Breast epithelium (tissue), 4 donors: ENCODE measurements at regions of chr12 and their contacts with region 1.

Region 1: GRCh38 chr12:30006021-30006420 is 222.3 kb upstream of the TMTC1 start:
- DNase-seq: no peak
- H3K4me3 ChIP-seq: no peak overlapping the region
- H3K27ac ChIP-seq: no peak overlapping the region
- H3K4me1 ChIP-seq: no peaks in the 10 kb centered on the region
- H3K27me3 ChIP-seq: no peaks in the 10 kb centered on the region
- CTCF ChIP-seq: no peak
- POLR2A ChIP-seq: no peak

Region 2: DNA sequence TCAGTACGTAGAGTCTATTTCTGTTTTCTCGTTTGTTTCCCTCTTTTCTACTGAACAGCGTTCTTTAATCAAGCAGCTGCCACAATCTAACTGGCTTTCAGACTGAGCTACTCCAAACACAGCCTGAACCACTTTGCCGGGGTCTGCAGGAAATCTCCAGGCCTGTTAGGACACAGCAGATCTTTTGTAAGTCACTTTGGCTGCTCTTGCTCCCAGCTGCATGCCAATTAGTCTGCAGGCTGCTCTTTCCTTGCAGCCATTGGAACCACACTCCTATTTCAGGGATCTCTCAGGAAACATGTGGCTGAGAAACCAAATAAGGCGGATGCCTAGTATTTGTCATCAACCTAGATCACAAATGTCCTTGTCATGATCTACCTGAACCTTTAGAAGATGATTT is 295.9 kb before region 1 on chr12:
- intact Hi-C with region 1: no loop called
- DNase-seq: peak in 1 of 2 donors; percentile 38
- H3K4me3 ChIP-seq: no peak overlapping the region
- H3K27ac ChIP-seq: peak overlapping the region in 1 of 2 donors; percentile 59
- H3K4me1 ChIP-seq: no peaks in the 10 kb centered on the region
- H3K27me3 ChIP-seq: no peaks in the 10 kb centered on the region
- CTCF ChIP-seq: no peak
- POLR2A ChIP-seq: no peak

Region 3: DNA sequence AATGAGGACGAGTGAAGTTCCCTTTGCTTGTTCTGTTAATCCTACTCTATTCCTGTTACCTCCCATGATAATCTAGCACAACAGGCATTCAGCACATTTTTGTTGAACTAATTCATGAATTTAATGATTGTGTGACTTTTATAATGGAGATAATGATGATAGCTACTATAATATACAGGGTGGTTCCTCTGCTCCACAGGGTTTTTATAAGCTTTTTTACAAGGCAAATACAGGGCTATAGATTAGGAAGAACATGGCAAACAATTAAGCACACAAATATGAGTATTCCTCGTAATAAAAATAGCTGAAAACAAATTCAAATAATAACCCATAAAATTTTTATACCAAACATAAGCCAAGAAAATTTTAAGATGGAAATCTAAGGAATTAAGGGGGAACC is 76.7 kb before region 1 on chr12:
- intact Hi-C with region 1: no loop called
- DNase-seq: no peak
- H3K4me3 ChIP-seq: no peak overlapping the region
- H3K27ac ChIP-seq: no peak overlapping the region
- H3K4me1 ChIP-seq: no peaks in the 10 kb centered on the region
- H3K27me3 ChIP-seq: no peaks in the 10 kb centered on the region
- CTCF ChIP-seq: no peak
- POLR2A ChIP-seq: no peak

Region 4: DNA sequence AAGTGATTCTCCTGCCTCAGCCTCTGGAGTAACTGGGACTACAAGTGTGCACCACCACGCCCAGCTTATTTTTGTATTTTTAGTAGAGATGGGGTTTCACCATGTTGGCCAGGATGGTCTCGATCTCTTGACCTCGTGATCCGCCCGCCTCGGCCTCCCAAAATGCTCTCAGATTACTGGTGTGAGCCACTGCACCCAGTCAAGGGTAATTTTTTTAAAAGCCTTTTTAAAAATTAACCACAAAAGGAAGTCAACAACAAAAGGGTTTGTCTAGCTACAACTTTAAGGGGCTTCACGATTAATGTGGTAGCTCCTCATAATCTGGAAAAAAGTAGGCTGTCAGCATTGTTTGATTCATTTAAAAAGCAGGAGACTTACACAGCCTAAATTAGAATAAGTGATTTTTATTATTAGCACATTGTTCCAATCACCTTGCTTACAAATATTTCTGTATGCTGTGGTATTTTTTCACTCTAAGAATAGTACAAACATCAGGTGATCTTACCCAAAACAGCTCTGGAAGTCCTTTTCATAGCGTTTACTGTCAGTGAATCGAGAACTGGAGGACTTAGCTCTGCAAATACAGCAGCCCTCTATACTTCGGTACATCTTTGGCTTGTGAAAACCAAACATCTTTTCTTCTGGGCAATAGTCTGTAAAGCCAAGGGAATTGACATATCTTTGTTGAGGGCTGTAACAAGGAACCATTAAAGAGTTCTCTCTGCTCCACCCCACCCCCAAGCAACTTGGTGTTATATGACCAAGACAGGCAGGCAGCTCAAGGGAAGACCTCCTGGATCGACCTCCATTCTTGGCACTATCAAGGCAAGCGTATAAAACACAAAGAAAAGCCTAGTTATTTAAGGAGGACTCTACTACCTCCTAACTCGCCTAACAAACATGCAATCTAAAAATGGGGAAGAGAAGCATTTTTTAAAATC is 1291.8 kb after region 1 on chr12:
- intact Hi-C with region 1: loop called (anchors 5 kb)
- DNase-seq: no peak
- H3K4me3 ChIP-seq: no peak overlapping the region
- H3K27ac ChIP-seq: no peak overlapping the region
- H3K4me1 ChIP-seq: peaks cover 0 to 8% of the 10 kb centered on the region in 2 donors
- H3K27me3 ChIP-seq: no peaks in the 10 kb centered on the region
- CTCF ChIP-seq: no peak
- POLR2A ChIP-seq: no peak